ENCODE measurements at regions of chr4 and their contacts with region 1.

Region 1: DNA sequence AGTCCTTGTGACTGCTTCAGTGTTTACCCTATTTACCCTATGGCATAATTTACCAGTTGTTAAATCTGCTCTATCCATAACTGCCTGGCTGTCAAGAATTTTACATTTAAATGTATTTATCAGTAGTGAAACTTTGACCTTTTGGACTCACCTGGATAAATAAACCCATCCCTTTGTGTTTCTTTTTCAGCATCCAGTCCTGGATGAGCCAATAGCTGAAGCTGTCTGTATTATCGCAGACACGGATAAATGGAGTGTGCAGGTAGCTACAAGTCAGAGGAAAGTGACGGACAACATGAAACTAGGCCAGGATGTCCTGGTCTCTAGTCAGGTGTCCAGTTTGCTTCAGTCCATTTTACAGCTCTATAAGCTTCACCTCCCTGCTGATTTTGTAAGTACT is 122.4 kb downstream of the FNIP2 start:
- DNase-seq: no peak
- H3K4me3 ChIP-seq: no peak overlapping the region
- H3K27ac ChIP-seq: no peak overlapping the region
- H3K4me1 ChIP-seq: no peaks in the 10 kb centered on the region
- H3K27me3 ChIP-seq: no peaks in the 10 kb centered on the region
- CTCF ChIP-seq: no peak

Region 2: GRCh38 chr4:159282329-159282728 is 391.1 kb after region 1 on chr4:
- CTCF ChIA-PET with region 1: no interaction called
- POLR2A ChIA-PET with region 1: interaction called, 15 read pairs
- intact Hi-C with region 1: no loop called
- DNase-seq: no peak
- H3K4me3 ChIP-seq: no peak overlapping the region
- H3K27ac ChIP-seq: no peak overlapping the region
- H3K4me1 ChIP-seq: peaks cover 17% of the 10 kb centered on the region
- H3K27me3 ChIP-seq: no peaks in the 10 kb centered on the region
- CTCF ChIP-seq: no peak

Measured in PC-9 (cell line).